Psoas muscle (tissue), 8 donors: ENCODE measurements at regions of chr14 and their contacts with region 1.

Region 1: GRCh38 chr14:93137864-93138263 is 22.1 kb upstream of the ITPK1 start:
- DNase-seq: peak; percentile 28 to 65
- ATAC-seq: peak in 3 of 4 donors; percentile 40 to 64 (median 52)
- H3K4me3 ChIP-seq: no peak overlapping the region
- H3K27ac ChIP-seq: no peak overlapping the region
- H3K4me1 ChIP-seq: no peaks in the 10 kb centered on the region
- H3K27me3 ChIP-seq: no peaks in the 10 kb centered on the region
- CTCF ChIP-seq: no peak

Region 2: GRCh38 chr14:92951912-92952471 is 185.9 kb before region 1 on chr14:
- intact Hi-C with region 1: loop called (anchors 1 to 5 kb)
- DNase-seq: peak; percentile 77 to 87
- ATAC-seq: peak; percentile 88 to 96 (median 92)
- H3K4me3 ChIP-seq: no peak overlapping the region
- H3K27ac ChIP-seq: no peak overlapping the region
- H3K4me1 ChIP-seq: no peaks in the 10 kb centered on the region
- H3K27me3 ChIP-seq: no peaks in the 10 kb centered on the region
- CTCF ChIP-seq: peak; percentile 96

Region 3: GRCh38 chr14:93109572-93110481 is 28.0 kb before region 1 on chr14:
- intact Hi-C with region 1: no loop called
- DNase-seq: no peak
- ATAC-seq: no peak
- H3K4me3 ChIP-seq: no peak overlapping the region
- H3K27ac ChIP-seq: no peak overlapping the region
- H3K4me1 ChIP-seq: peaks cover 19% of the 10 kb centered on the region
- H3K27me3 ChIP-seq: no peaks in the 10 kb centered on the region
- CTCF ChIP-seq: no peak

Region 4: DNA sequence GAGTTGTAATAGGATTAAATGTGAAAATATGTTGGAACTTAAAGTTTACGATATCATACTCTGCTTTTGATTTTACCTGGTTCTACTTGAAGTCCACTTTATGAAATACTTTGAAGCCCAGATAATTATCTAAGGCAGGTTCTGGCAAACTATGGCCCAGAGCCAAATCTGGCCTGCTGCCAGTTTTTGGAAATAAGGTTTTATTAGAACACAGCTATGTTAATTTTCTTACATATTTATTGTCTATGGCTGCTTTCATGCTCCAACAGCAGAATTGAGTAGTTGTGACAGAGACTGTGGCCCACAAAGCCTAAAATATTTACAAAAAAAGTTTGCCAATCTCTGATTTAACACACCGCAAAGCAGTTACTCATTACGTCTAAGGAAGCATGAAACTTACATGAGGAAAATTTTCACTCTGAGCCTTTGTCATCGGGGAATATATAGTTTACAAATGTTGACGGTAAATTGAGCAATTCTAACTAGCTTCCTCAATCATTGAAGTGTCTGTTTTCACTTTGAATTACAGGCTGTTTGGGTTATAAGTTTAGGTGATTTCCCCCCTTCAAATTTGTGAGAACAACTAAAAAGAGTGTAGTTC is 389.3 kb after region 1 on chr14:
- intact Hi-C with region 1: no loop called
- DNase-seq: no peak
- ATAC-seq: no peak
- H3K4me3 ChIP-seq: no peak overlapping the region
- H3K27ac ChIP-seq: no peak overlapping the region
- H3K4me1 ChIP-seq: no peaks in the 10 kb centered on the region
- H3K27me3 ChIP-seq: no peaks in the 10 kb centered on the region
- CTCF ChIP-seq: no peak

Region 5: GRCh38 chr14:95023886-95024285 is 1886.0 kb after region 1 on chr14:
- intact Hi-C with region 1: no loop called
- DNase-seq: no peak
- ATAC-seq: no peak
- H3K4me3 ChIP-seq: no peak overlapping the region
- H3K27ac ChIP-seq: no peak overlapping the region
- H3K4me1 ChIP-seq: no peaks in the 10 kb centered on the region
- H3K27me3 ChIP-seq: no peaks in the 10 kb centered on the region
- CTCF ChIP-seq: no peak